ENCODE measurements at regions of chr2 and their contacts with region 1.

Region 1: DNA sequence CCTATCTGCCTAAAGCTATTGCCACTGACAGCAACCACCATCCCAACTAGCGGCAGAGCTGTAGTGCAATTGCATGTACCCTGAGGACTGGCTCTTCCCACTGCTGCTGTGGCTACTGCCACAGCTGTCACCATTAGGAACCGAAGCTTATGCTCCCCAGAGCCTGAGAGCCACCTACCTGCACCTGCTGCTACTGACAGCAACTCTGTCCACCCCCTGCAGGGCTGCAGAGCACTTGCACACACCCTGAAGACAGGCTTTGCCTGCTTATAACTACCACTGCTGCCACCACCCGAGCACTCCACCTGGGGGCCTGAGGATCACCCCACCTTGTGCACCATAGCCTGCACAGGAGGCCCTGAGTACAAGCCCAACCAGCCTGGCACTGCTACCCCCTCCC is 217.6 kb upstream of the FOSL2 start:
- DNase-seq: no peak
- H3K4me3 ChIP-seq: no peak overlapping the region
- H3K27ac ChIP-seq: no peak overlapping the region
- H3K4me1 ChIP-seq: peaks cover 25% of the 10 kb centered on the region
- H3K27me3 ChIP-seq: no peaks in the 10 kb centered on the region
- CTCF ChIP-seq: peak; percentile 19 to 28

Region 2: DNA sequence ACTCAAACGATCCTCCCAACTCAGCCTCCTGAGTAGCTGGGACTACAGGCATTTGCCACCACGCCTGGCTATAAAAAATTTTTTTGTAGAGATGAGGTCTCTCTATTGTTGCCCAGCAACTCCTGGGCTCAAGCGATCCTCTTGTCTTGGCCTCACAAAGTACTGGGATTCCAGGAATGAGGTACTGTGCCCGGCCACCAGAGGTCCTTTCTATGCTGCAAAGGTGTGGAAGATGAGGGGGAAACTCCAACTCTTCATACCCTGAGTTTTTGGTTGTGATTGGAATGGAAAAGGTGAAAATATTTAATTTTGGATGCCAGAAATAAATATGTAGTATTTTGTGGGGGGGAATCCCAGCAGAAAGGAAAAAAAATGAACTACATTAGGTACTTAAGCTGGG is 367.6 kb before region 1 on chr2:
- CTCF ChIA-PET with region 1: no interaction called
- dilution Hi-C with region 1: no loop called
- in situ Hi-C with region 1: no loop called
- intact Hi-C with region 1: loop called (anchors 2 kb)
- DNase-seq: peak; percentile 35
- H3K4me3 ChIP-seq: no peak overlapping the region
- H3K27ac ChIP-seq: no peak overlapping the region
- H3K4me1 ChIP-seq: peaks cover 28% of the 10 kb centered on the region
- H3K27me3 ChIP-seq: no peaks in the 10 kb centered on the region
- CTCF ChIP-seq: peak; percentile 62 to 75

Region 3: GRCh38 chr2:28276076-28276618 is 101.1 kb after region 1 on chr2:
- CTCF ChIA-PET with region 1: no interaction called
- dilution Hi-C with region 1: no loop called
- in situ Hi-C with region 1: no loop called
- intact Hi-C with region 1: loop called (anchors 5 kb)
- DNase-seq: peak; percentile 98
- H3K4me3 ChIP-seq: no peak overlapping the region
- H3K27ac ChIP-seq: peak overlapping the region; percentile 90
- H3K4me1 ChIP-seq: peaks cover 34% of the 10 kb centered on the region
- H3K27me3 ChIP-seq: no peaks in the 10 kb centered on the region
- CTCF ChIP-seq: no peak

Measured in mammary epithelial cell (primary cell).